CD4-positive, alpha-beta memory T cell (primary cell): ENCODE measurements at regions of chr12 and their contacts with region 1.

Region 1: GRCh38 chr12:6607751-6608591 is 792 bp upstream of the CHD4 start:
- DNase-seq: peak; percentile 74 to 90 (median 79)
- H3K4me3 ChIP-seq: no peak overlapping the region
- H3K4me3 Mint-ChIP-seq: no peak overlapping the region
- H3K27ac ChIP-seq: peak overlapping the region; percentile 84
- H3K27ac Mint-ChIP-seq: no peak overlapping the region
- H3K4me1 ChIP-seq: peaks cover 58% of the 10 kb centered on the region
- H3K4me1 Mint-ChIP-seq: peaks cover 41 to 55% (median 47%) of the 10 kb centered on the region in 4 donors
- H3K27me3 ChIP-seq: no peaks in the 10 kb centered on the region
- H3K27me3 Mint-ChIP-seq: no peaks in the 10 kb centered on the region

Region 2: GRCh38 chr12:4857472-4858291 is 1750.3 kb before region 1 on chr12:
- CTCF ChIA-PET with region 1: no interaction called
- POLR2A ChIA-PET with region 1: no interaction called
- intact Hi-C with region 1: no loop called
- DNase-seq: peak; percentile 56 to 65 (median 62)
- H3K4me3 ChIP-seq: peak overlapping the region in 1 of 2 donors; percentile 3
- H3K4me3 Mint-ChIP-seq: peak overlapping the region; percentile 72 to 86 (median 80)
- H3K27ac ChIP-seq: no peak overlapping the region
- H3K27ac Mint-ChIP-seq: peak overlapping the region in 1 of 7 donors; percentile 36
- H3K4me1 ChIP-seq: peaks cover 10% of the 10 kb centered on the region
- H3K4me1 Mint-ChIP-seq: peaks cover 11 to 22% (median 14%) of the 10 kb centered on the region in 4 donors
- H3K27me3 ChIP-seq: peaks cover 10% of the 10 kb centered on the region
- H3K27me3 Mint-ChIP-seq: peaks cover 9 to 12% of the 10 kb centered on the region in 2 donors

Region 3: GRCh38 chr12:6476489-6476888 is 131.5 kb before region 1 on chr12:
- CTCF ChIA-PET with region 1: no interaction called
- POLR2A ChIA-PET with region 1: no interaction called
- intact Hi-C with region 1: no loop called
- DNase-seq: no peak
- H3K4me3 ChIP-seq: no peak overlapping the region
- H3K4me3 Mint-ChIP-seq: no peak overlapping the region
- H3K27ac ChIP-seq: no peak overlapping the region
- H3K27ac Mint-ChIP-seq: no peak overlapping the region
- H3K4me1 ChIP-seq: peaks cover 1% of the 10 kb centered on the region
- H3K4me1 Mint-ChIP-seq: peaks cover 0 to 3% (median under 1%) of the 10 kb centered on the region in 4 donors
- H3K27me3 ChIP-seq: no peaks in the 10 kb centered on the region
- H3K27me3 Mint-ChIP-seq: peaks cover 0 to 2% of the 10 kb centered on the region in 2 donors

Region 4: DNA sequence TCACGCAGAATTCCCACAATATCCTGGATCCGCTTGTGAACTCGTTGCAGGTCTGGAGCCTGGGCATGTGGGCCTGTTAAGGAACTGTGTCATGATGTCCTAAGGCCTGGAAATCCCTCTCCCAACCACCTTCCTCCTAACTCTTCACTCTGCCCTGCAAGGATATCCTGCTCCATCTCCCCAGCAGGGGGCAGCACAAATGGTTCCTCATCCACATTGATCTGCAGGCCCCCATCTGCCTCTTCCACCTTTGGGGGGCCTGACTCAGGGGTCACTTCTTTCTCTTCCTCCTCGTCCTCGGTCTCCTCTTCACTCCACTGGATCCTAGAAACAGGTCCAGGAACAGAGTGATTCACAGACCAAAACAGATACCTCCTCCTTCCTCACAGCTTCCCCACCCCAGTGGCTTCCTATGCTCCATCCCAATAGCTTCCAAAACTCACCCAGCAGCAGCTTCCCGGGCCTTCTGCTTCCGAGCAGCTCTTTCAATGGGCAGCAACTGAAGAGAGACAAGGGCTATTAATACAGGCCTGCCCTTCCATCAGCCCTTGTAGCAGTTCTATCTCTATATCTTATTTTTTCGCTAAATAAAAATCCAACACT is 44.4 kb before region 1 on chr12:
- CTCF ChIA-PET with region 1: interaction called, 17 read pairs
- POLR2A ChIA-PET with region 1: interaction called, 14 read pairs
- intact Hi-C with region 1: loop called (anchors 2 kb)
- DNase-seq: peak; percentile 55 to 62 (median 58)
- H3K4me3 ChIP-seq: no peak overlapping the region
- H3K4me3 Mint-ChIP-seq: peak overlapping the region in 1 of 8 donors; percentile 57
- H3K27ac ChIP-seq: no peak overlapping the region
- H3K27ac Mint-ChIP-seq: peak overlapping the region in 6 of 7 donors; percentile 57 to 90 (median 68)
- H3K4me1 ChIP-seq: peaks cover 33% of the 10 kb centered on the region
- H3K4me1 Mint-ChIP-seq: peaks cover 19 to 48% (median 36%) of the 10 kb centered on the region in 4 donors
- H3K27me3 ChIP-seq: no peaks in the 10 kb centered on the region
- H3K27me3 Mint-ChIP-seq: no peaks in the 10 kb centered on the region

Region 5: DNA sequence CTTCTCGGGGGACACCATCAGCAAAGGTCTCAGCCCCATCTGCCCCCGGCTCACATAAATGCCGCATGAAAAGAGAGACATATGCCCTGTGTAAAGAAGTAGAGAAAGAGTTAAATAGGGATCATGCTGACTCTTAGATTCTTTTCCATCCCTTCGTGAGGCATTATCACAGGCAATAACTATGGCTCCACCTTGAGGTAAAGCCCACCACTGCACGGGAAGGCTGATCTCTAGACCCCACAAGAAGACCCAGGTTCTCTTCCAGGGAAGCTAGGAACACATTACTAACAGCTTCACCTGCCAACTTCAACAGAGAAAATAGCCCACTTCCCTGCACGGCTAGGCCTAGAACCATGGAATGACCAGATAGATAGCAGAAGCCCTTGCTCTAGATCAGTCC is 25.8 kb before region 1 on chr12:
- CTCF ChIA-PET with region 1: no interaction called
- POLR2A ChIA-PET with region 1: interaction called, 23 read pairs
- intact Hi-C with region 1: no loop called
- DNase-seq: no peak
- H3K4me3 ChIP-seq: no peak overlapping the region
- H3K4me3 Mint-ChIP-seq: no peak overlapping the region
- H3K27ac ChIP-seq: no peak overlapping the region
- H3K27ac Mint-ChIP-seq: peak overlapping the region in 2 of 7 donors; percentile 17 to 30
- H3K4me1 ChIP-seq: no peaks in the 10 kb centered on the region
- H3K4me1 Mint-ChIP-seq: peaks cover 0 to 2% (median 0%) of the 10 kb centered on the region in 4 donors
- H3K27me3 ChIP-seq: no peaks in the 10 kb centered on the region
- H3K27me3 Mint-ChIP-seq: no peaks in the 10 kb centered on the region

Region 6: DNA sequence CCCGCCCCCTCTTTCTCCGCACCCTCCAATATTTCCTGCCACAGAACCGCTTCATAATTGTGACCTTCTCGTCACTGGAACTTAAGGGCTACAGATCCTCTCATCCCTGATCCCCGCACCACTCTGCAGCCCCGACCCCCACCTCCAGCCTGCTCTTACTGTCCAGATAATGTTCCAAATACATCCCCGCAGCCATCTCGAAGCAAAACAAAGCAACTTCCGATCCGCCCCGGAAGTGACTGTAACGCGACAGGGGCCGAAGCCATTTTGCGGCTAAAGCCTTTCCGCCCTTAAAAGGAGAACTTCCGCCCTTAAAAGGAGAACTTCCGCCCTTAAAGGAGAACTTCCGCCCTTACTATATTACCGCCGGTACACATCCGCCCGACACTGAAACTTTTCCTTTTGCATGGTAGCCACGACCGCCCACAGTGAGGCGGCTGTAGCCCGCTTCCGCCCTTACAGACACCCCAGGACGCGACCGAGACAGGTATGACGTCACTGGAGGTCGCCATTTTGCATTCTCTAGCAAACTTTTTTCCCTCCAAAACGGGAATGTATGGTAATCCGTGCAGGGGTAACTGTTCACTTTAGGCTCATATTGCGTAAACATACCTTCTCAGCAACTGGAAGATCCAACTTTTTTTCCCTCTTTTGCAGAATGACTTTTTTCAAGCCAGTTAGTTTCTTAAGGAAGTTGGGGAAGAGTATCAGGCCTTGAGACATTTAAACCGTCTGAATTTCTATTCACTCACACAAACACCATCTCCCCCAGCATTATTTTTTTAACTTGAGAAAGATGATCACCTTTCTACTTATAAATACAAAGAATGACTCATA is 55.2 kb after region 1 on chr12 and contains the start of gene ING4:
- CTCF ChIA-PET with region 1: no interaction called
- POLR2A ChIA-PET with region 1: interaction called, 7 read pairs
- intact Hi-C with region 1: loop called (anchors 1 kb)
- DNase-seq: peak; percentile 95 to 99 (median 98)
- H3K4me3 ChIP-seq: peak within 1 kb of the TSS; percentile 97
- H3K4me3 Mint-ChIP-seq: peak within 1 kb of the TSS; percentile 91 to 97 (median 94)
- H3K27ac ChIP-seq: peak within 1 kb of the TSS; percentile 79
- H3K27ac Mint-ChIP-seq: peak within 1 kb of the TSS; percentile 88 to 98 (median 98)
- H3K4me1 ChIP-seq: peaks cover 21% of the 10 kb centered on the region
- H3K4me1 Mint-ChIP-seq: peaks cover 20 to 42% (median 30%) of the 10 kb centered on the region in 4 donors
- H3K27me3 ChIP-seq: no peaks in the 10 kb centered on the region
- H3K27me3 Mint-ChIP-seq: no peaks in the 10 kb centered on the region
- total RNA-seq, gene ING4: 82.3 to 83.5 TPM

Region 7: GRCh38 chr12:6759741-6760140 is 151.8 kb after region 1 on chr12:
- CTCF ChIA-PET with region 1: no interaction called
- POLR2A ChIA-PET with region 1: no interaction called
- intact Hi-C with region 1: no loop called
- DNase-seq: no peak
- H3K4me3 ChIP-seq: no peak overlapping the region
- H3K4me3 Mint-ChIP-seq: no peak overlapping the region
- H3K27ac ChIP-seq: no peak overlapping the region
- H3K27ac Mint-ChIP-seq: peak overlapping the region in 1 of 7 donors; percentile 69
- H3K4me1 ChIP-seq: peaks cover 8% of the 10 kb centered on the region
- H3K4me1 Mint-ChIP-seq: peaks cover 5 to 12% (median 8%) of the 10 kb centered on the region in 4 donors
- H3K27me3 ChIP-seq: no peaks in the 10 kb centered on the region
- H3K27me3 Mint-ChIP-seq: peaks cover 5 to 10% of the 10 kb centered on the region in 2 donors

Region 8: GRCh38 chr12:7122811-7123769 is 515.1 kb after region 1 on chr12:
- CTCF ChIA-PET with region 1: no interaction called
- POLR2A ChIA-PET with region 1: no interaction called
- intact Hi-C with region 1: no loop called
- DNase-seq: no peak
- H3K4me3 ChIP-seq: no peak overlapping the region
- H3K4me3 Mint-ChIP-seq: no peak overlapping the region
- H3K27ac ChIP-seq: no peak overlapping the region
- H3K27ac Mint-ChIP-seq: no peak overlapping the region
- H3K4me1 ChIP-seq: no peaks in the 10 kb centered on the region
- H3K4me1 Mint-ChIP-seq: peaks cover 0 to 2% (median under 1%) of the 10 kb centered on the region in 4 donors
- H3K27me3 ChIP-seq: no peaks in the 10 kb centered on the region
- H3K27me3 Mint-ChIP-seq: no peaks in the 10 kb centered on the region